ENCODE measurements at regions of chr2 and their contacts with region 1.

Region 1: GRCh38 chr2:95115418-95115817 is 6.2 kb downstream of the MRPS5 start:
- DNase-seq: peak; percentile 85
- ATAC-seq: peak; percentile 99
- H3K4me3 Mint-ChIP-seq: no peak overlapping the region
- H3K27ac Mint-ChIP-seq: peak overlapping the region; percentile 19
- H3K4me1 Mint-ChIP-seq: peaks cover 43% of the 10 kb centered on the region
- H3K27me3 Mint-ChIP-seq: no peaks in the 10 kb centered on the region

Region 2: GRCh38 chr2:94986392-94986963 is 128.9 kb before region 1 on chr2:
- CTCF ChIA-PET with region 1: interaction called, 15 read pairs
- DNase-seq: peak; percentile 59
- ATAC-seq: no peak
- H3K4me3 Mint-ChIP-seq: no peak overlapping the region
- H3K27ac Mint-ChIP-seq: no peak overlapping the region
- H3K4me1 Mint-ChIP-seq: peaks cover 3% of the 10 kb centered on the region
- H3K27me3 Mint-ChIP-seq: peaks cover 20% of the 10 kb centered on the region

Region 3: GRCh38 chr2:95062242-95063085 is 53.0 kb before region 1 on chr2:
- CTCF ChIA-PET with region 1: interaction called, 10 read pairs
- DNase-seq: peak; percentile 35
- ATAC-seq: peak; percentile 34
- H3K4me3 Mint-ChIP-seq: no peak overlapping the region
- H3K27ac Mint-ChIP-seq: peak overlapping the region; percentile 80
- H3K4me1 Mint-ChIP-seq: peaks cover 29% of the 10 kb centered on the region
- H3K27me3 Mint-ChIP-seq: peaks cover 2% of the 10 kb centered on the region

Measured in activated CD8-positive, alpha-beta memory T cell treated with anti-CD3 and anti-CD28 coated beads, Interleukin-2, amount 10 ng/mL, durations not matched to agents 7 days and 5 days (primary cell).